Caco-2 (cell line): ENCODE measurements at regions of chr3 and their contacts with region 1.

Region 1: GRCh38 chr3:157201648-157202278 is 41.8 kb upstream of the CCNL1 start:
- DNase-seq: peak in 1 of 2 experiments; percentile 10
- H3K4me3 ChIP-seq: no peak overlapping the region
- H3K4me3 Mint-ChIP-seq: no peak overlapping the region
- H3K27ac Mint-ChIP-seq: no peak overlapping the region
- H3K4me1 ChIP-seq: no peaks in the 10 kb centered on the region
- H3K4me1 Mint-ChIP-seq: no peaks in the 10 kb centered on the region
- H3K27me3 ChIP-seq: no peaks in the 10 kb centered on the region
- H3K27me3 Mint-ChIP-seq: no peaks in the 10 kb centered on the region
- CTCF ChIP-seq: peak; percentile 45 to 55

Region 2: DNA sequence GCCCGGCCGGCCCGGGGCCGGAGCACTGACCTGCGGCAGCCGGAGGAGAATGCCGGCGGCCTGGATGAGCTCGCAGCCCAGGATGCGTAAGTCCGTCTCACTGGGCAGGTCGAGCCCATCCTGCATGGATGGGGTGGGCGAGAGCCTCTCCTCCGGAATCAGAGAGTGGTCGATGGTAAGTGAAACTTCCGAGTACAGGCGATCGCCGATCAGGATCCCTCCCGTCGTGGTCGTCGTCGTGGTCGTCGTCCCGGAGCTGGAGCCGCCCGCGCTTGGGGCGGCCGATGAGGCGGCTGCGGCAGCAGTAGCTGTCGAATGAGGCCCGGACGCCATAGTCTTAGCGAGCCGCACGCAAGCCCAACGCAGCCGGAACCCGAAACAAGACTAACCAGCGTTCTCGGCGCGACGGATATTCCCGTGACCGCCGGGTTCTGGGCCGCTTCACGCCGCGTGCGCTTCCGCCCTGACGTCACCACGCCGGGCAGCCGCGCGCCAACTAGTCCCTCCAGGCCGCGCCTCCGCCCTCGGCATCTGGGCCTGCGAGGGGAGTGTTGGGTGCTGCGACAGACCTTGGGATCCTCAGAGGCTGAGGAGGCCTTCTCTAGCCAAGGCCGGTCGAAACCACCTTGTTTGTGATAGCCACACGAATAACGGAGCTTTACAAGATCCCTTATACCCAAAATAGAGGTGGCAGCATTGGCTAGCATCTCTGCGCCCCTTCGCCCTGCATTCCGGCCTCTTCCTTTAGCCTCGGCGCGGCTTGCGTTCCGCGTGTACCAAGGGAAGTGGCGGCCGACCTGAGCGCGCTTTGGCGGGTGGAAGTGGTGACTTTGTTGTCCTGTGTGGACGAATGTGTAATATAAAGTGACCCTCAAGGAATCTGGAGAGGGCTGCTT is 41.8 kb before region 1 on chr3 and contains the start of gene CCNL1:
- CTCF ChIA-PET with region 1: interaction called, 5 read pairs
- POLR2A ChIA-PET with region 1: interaction called, 6 read pairs
- intact Hi-C with region 1: loop called (anchors 2 kb)
- DNase-seq: peak; percentile 94 to 97
- H3K4me3 ChIP-seq: peak within 1 kb of the TSS; percentile 98
- H3K4me3 Mint-ChIP-seq: peak within 1 kb of the TSS; percentile 92
- H3K27ac Mint-ChIP-seq: peak within 1 kb of the TSS; percentile 96
- H3K4me1 ChIP-seq: peaks cover 41% of the 10 kb centered on the region
- H3K4me1 Mint-ChIP-seq: peaks cover 12% of the 10 kb centered on the region
- H3K27me3 ChIP-seq: no peaks in the 10 kb centered on the region
- H3K27me3 Mint-ChIP-seq: no peaks in the 10 kb centered on the region
- CTCF ChIP-seq: no peak
- total RNA-seq, gene CCNL1: 108 and 114 TPM in 2 replicates

Region 3: DNA sequence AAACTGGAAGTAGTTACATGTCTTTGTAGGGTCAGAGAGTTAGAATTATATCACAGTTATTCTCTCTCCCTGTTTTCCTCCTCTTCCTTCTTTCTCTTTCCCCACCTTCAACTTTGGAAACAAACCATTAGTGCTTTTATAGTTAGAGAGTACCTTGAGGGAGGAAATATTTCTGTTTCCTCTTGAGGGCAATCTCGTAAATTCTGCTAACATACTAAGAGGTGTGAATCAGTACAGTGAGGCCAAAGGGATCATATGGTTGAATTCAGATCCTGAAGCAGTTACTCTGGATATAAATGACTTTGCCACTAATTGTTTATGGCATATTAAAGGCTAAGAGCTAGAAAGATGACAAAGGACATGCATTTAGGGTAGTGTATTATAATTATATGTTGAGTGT is 18.4 kb after region 1 on chr3:
- CTCF ChIA-PET with region 1: interaction called, 3 read pairs
- POLR2A ChIA-PET with region 1: interaction called, 15 read pairs
- intact Hi-C with region 1: no loop called
- DNase-seq: no peak
- H3K4me3 ChIP-seq: no peak overlapping the region
- H3K4me3 Mint-ChIP-seq: no peak overlapping the region
- H3K27ac Mint-ChIP-seq: no peak overlapping the region
- H3K4me1 ChIP-seq: no peaks in the 10 kb centered on the region
- H3K4me1 Mint-ChIP-seq: no peaks in the 10 kb centered on the region
- H3K27me3 ChIP-seq: no peaks in the 10 kb centered on the region
- H3K27me3 Mint-ChIP-seq: no peaks in the 10 kb centered on the region
- CTCF ChIP-seq: no peak

Region 4: GRCh38 chr3:157447026-157447694 is 245.4 kb after region 1 on chr3:
- CTCF ChIA-PET with region 1: no interaction called
- POLR2A ChIA-PET with region 1: no interaction called
- intact Hi-C with region 1: loop called (anchors 10 kb)
- DNase-seq: no peak
- H3K4me3 ChIP-seq: no peak overlapping the region
- H3K4me3 Mint-ChIP-seq: no peak overlapping the region
- H3K27ac Mint-ChIP-seq: no peak overlapping the region
- H3K4me1 ChIP-seq: no peaks in the 10 kb centered on the region
- H3K4me1 Mint-ChIP-seq: no peaks in the 10 kb centered on the region
- H3K27me3 ChIP-seq: no peaks in the 10 kb centered on the region
- H3K27me3 Mint-ChIP-seq: peaks cover 3% of the 10 kb centered on the region
- CTCF ChIP-seq: peak; percentile 36 to 64

Region 5: DNA sequence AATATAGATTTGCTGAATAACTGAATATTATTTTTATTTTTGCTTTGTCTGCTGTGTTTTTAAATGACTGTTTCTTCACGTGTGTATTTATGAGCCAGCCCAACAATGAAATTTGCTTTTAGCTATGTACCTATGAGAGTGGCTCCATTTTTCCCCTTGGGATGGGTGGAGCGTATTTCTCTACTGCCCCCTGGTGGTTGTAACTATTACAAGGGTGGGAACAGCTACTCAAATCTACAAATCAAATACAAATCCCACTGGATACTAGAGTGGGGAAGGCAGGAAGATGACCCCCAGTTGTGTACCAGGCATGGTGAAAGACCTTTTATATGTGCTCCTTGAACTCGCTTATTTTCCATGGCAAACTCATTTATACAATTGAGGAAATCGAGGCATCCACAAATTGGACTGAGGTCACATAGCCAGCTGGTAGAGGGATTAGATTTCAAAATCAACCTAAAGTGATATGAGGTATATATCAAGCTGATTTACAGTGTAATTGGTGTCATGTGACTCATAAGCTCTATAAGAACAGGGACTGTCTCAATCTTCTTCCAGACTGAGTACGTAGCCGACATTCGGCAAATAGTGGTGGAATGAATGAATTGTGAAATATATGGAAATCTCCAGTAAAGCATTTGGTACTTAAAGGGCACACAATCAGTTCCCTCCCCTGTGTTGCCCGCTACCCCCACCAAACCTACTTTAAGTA is 371.0 kb after region 1 on chr3:
- CTCF ChIA-PET with region 1: interaction called, 3 read pairs
- POLR2A ChIA-PET with region 1: no interaction called
- intact Hi-C with region 1: loop called (anchors 2 kb)
- DNase-seq: peak; percentile 48 to 71
- H3K4me3 ChIP-seq: no peak overlapping the region
- H3K4me3 Mint-ChIP-seq: no peak overlapping the region
- H3K27ac Mint-ChIP-seq: no peak overlapping the region
- H3K4me1 ChIP-seq: 0 out of 2 replicates have a peak, but pooled peaks cover 3% of the 10 kb centered on the region
- H3K4me1 Mint-ChIP-seq: peaks cover 11% of the 10 kb centered on the region
- H3K27me3 ChIP-seq: no peaks in the 10 kb centered on the region
- H3K27me3 Mint-ChIP-seq: peaks cover 2% of the 10 kb centered on the region
- CTCF ChIP-seq: peak; percentile 78 to 88